CD8-positive, alpha-beta T cell (primary cell): ENCODE measurements at regions of chr6 and their contacts with region 1.

Region 1: DNA sequence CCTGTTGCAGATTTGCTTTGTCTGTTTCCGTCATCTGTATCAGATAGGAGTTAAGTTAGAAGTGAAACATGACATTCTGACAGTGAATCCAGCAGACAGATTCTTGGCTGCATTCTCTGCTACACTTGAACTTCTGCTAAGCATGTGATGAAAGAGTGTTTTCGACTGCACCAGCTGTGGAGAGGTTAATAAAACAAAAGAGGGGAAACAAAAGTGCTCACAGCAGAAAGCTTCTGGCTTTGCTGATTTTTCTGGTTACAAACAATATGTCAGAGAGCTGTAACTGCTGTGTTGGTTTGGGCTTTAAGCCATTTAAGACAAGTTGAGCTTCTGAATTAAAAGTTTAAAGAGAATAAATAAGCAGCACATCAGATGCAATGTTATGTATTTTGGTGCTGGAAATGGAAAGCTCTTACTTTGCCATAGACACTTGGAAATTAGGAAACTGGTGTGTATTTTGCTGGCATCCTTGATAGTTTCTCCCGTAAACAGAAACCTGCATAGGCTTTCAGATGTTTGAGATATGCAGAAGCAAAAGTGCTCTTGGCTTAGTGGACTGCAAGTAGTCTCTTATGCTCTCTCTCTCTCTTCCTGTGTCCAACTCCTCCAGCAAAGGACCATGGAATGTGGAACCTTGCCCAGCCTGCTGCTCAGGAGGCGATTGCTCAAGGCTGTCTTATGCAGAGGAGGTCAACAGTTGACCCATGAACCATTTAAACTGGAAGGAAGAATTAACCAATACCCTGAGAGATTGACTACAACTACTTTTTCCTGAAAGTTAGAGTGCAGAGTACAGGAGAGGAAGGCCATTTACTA is 104.9 kb downstream of the RPS12 start:
- DNase-seq: no peak
- ATAC-seq: no peak
- H3K4me3 ChIP-seq: no peak overlapping the region
- H3K4me3 Mint-ChIP-seq: no peak overlapping the region
- H3K27ac ChIP-seq: no peak overlapping the region
- H3K27ac Mint-ChIP-seq: no peak overlapping the region
- H3K4me1 ChIP-seq: no peaks in the 10 kb centered on the region
- H3K4me1 Mint-ChIP-seq: no peaks in the 10 kb centered on the region
- H3K27me3 ChIP-seq: no peaks in the 10 kb centered on the region
- H3K27me3 Mint-ChIP-seq: peaks cover 7% of the 10 kb centered on the region
- CTCF ChIP-seq: no peak

Region 2: GRCh38 chr6:131167773-131168172 is 1751.5 kb before region 1 on chr6:
- CTCF ChIA-PET with region 1: no interaction called
- POLR2A ChIA-PET with region 1: no interaction called
- intact Hi-C with region 1: loop called in 1 of 2 experiments (anchors 10 kb)
- DNase-seq: no peak
- ATAC-seq: no peak
- H3K4me3 ChIP-seq: no peak overlapping the region
- H3K4me3 Mint-ChIP-seq: no peak overlapping the region
- H3K27ac ChIP-seq: no peak overlapping the region
- H3K27ac Mint-ChIP-seq: no peak overlapping the region
- H3K4me1 ChIP-seq: no peaks in the 10 kb centered on the region
- H3K4me1 Mint-ChIP-seq: no peaks in the 10 kb centered on the region
- H3K27me3 ChIP-seq: no peaks in the 10 kb centered on the region
- H3K27me3 Mint-ChIP-seq: no peaks in the 10 kb centered on the region
- CTCF ChIP-seq: no peak

Region 3: GRCh38 chr6:132907914-132908313 is 11.3 kb before region 1 on chr6:
- CTCF ChIA-PET with region 1: no interaction called
- POLR2A ChIA-PET with region 1: no interaction called
- intact Hi-C with region 1: no loop called
- DNase-seq: no peak
- ATAC-seq: no peak
- H3K4me3 ChIP-seq: no peak overlapping the region
- H3K4me3 Mint-ChIP-seq: no peak overlapping the region
- H3K27ac ChIP-seq: no peak overlapping the region
- H3K27ac Mint-ChIP-seq: no peak overlapping the region
- H3K4me1 ChIP-seq: no peaks in the 10 kb centered on the region
- H3K4me1 Mint-ChIP-seq: no peaks in the 10 kb centered on the region
- H3K27me3 ChIP-seq: no peaks in the 10 kb centered on the region
- H3K27me3 Mint-ChIP-seq: peaks cover 2% of the 10 kb centered on the region
- CTCF ChIP-seq: no peak